AG04449 (cell line): ENCODE measurements at regions of chr6 and their contacts with region 1.

Region 1: GRCh38 chr6:110873981-110874879 is at the start of gene AMD1:
- DNase-seq: peak; percentile 84
- H3K4me3 ChIP-seq: peak within 1 kb of the TSS; percentile 85
- CTCF ChIP-seq: no peak

Region 2: GRCh38 chr6:110083875-110084585 is 790.2 kb before region 1 on chr6:
- CTCF ChIA-PET with region 1: no interaction called
- POLR2A ChIA-PET with region 1: no interaction called
- DNase-seq: no peak
- H3K4me3 ChIP-seq: no peak overlapping the region
- CTCF ChIP-seq: no peak

Region 3: GRCh38 chr6:110528101-110528929 is 345.9 kb before region 1 on chr6:
- CTCF ChIA-PET with region 1: interaction called, 8 read pairs
- POLR2A ChIA-PET with region 1: interaction called, 23 read pairs
- DNase-seq: peak; percentile 79
- H3K4me3 ChIP-seq: no peak overlapping the region
- CTCF ChIP-seq: peak; percentile 48

Region 4: GRCh38 chr6:110815217-110816109 is 58.8 kb before region 1 on chr6 and contains the start of gene CDK19:
- CTCF ChIA-PET with region 1: interaction called, 3 read pairs
- POLR2A ChIA-PET with region 1: interaction called, 48 read pairs
- DNase-seq: peak; percentile 84
- H3K4me3 ChIP-seq: peak within 1 kb of the TSS; percentile 94
- CTCF ChIP-seq: no peak

Region 5: DNA sequence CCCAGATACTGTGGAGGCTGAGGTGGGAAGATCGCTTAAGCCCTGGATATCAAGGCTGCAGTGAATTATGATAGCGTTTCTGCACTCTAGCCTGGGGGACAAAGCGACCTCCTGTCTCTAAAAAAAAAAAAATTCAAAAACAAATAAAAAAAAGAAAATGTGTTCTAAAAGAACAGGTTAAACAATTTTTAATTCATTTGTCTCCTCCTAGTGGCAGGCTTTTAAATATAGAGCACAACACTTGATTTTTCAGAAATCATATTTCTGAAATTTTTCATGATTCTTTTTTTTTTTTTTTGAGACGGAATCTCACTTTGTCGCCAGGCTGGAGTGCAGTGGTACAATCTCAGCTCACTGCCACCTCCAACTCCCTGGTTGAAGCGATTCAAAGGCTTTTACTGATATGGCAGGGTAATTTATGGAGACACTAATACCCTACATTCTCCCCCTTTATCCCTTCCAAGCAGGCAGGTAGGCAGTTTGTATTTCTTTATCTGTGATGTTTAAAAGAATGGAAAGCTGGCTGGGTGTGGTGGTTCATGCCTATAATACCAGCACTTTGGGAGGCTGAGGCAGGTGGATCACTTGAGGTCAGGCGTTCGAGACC is 75.6 kb after region 1 on chr6:
- CTCF ChIA-PET with region 1: interaction called, 6 read pairs
- POLR2A ChIA-PET with region 1: interaction called, 12 read pairs
- DNase-seq: no peak
- H3K4me3 ChIP-seq: no peak overlapping the region
- CTCF ChIP-seq: peak; percentile 0

Region 6: GRCh38 chr6:110958329-110959192 is 84.3 kb after region 1 on chr6 and contains the start of gene GTF3C6:
- CTCF ChIA-PET with region 1: no interaction called
- POLR2A ChIA-PET with region 1: interaction called, 27 read pairs
- DNase-seq: peak; percentile 65
- H3K4me3 ChIP-seq: peak within 1 kb of the TSS; percentile 89
- CTCF ChIP-seq: no peak

Region 7: DNA sequence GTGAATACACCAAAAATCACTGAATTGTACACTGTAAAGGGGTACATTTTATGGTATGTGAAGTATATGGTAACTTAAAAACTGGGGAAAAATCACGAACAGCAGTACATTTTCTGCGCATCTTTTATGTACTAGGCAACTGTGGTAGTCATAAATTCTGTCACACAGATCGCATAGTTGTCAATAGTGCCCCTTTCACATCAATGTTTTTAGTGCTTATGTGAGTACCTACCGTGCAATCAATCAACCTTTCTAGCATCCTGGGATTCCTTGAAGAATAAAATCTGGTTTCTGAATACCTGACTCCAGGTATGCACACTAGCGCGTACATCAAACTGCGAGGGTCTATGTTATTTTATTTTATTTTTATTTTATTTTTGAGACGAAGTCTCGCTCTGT is 107.0 kb after region 1 on chr6:
- CTCF ChIA-PET with region 1: no interaction called
- POLR2A ChIA-PET with region 1: interaction called, 10 read pairs
- DNase-seq: no peak
- H3K4me3 ChIP-seq: peak overlapping the region; percentile 97
- CTCF ChIP-seq: no peak

Region 8: DNA sequence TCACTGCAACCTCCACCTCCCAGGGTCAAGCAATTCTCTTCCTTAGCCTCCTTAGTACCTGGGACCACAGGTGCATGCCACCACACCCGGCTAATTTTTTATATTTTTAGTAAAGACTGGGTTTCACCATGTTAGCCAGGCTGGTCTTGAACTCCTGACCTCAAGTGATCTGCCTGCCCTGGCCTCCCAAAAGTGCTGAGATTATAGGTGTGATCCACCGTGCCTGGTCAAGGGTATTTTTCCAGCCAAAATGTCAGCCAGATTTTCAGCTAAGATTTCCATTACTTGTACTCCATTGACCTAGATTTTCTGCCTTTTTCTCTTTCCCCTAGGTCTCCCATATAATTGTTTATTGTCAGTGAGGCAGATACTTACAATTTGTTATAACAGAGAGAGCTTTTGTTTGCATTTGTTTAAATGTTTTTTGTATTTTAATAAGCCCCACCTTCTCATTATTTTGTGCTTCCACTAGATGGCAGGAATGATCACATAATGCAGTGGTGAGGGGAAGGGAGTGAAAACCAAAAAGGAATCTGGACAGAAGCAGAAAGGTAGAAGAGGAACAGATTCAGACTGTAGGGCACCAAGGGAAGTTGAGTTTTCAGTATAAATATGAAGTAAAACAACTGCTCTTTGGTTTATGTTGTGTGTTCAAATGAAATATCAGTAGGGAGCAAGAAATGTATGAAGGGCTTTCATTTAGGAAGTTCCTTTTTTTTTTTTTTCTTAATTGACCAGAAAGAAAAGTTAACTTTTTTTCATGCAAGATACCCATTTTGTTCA is 137.3 kb after region 1 on chr6:
- CTCF ChIA-PET with region 1: no interaction called
- POLR2A ChIA-PET with region 1: no interaction called
- DNase-seq: no peak
- H3K4me3 ChIP-seq: no peak overlapping the region
- CTCF ChIP-seq: peak; percentile 52